ENCODE measurements at regions of chr16 and their contacts with region 1.

Region 1: DNA sequence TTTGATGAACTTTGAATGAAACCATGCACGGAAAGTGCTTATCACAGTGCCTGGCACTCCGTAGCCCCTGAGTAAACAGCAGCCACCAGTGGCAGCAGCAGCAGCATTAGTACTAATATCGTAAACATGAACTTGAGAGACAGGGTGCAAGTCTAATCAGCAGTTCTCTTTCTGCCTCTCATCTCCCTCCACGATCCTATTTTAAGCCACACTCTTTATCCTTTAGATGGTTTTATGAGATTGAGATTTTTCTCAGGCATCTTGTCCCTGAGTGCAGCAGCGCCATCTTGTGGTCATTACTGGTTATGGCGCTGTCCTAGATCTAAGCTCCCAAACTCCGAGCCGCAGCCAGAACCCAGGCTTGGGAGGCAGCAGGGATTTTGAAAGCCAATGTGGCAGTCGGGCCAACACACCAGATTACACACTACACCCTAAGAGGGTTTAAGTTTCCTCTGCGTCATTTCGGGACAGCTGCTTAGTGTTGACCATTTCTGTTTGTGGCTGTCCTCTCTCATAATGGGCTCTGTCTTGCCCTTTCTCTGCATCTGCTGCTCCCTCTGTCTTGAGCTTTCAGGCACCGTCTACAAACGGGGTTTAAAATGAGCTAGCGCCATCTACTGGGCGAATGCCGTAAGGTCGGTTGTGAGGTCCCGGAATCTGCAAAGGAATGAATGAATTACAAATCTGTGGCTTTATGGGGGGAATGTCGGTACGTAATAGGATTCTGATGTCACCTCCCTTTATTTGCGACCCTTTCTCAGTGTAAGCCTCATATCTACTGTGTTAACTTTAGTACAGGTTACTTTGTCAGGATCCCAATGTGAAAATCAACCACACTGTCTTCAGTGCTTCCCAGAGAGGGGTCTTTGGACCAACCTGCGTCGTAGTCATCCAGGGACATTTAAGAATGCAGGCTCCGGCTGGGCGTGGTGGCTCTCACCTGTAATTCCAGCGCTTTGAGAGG is 64.5 kb downstream of the CYLD start:
- DNase-seq: peak; percentile 85
- CTCF ChIP-seq: peak; percentile 96

Region 2: DNA sequence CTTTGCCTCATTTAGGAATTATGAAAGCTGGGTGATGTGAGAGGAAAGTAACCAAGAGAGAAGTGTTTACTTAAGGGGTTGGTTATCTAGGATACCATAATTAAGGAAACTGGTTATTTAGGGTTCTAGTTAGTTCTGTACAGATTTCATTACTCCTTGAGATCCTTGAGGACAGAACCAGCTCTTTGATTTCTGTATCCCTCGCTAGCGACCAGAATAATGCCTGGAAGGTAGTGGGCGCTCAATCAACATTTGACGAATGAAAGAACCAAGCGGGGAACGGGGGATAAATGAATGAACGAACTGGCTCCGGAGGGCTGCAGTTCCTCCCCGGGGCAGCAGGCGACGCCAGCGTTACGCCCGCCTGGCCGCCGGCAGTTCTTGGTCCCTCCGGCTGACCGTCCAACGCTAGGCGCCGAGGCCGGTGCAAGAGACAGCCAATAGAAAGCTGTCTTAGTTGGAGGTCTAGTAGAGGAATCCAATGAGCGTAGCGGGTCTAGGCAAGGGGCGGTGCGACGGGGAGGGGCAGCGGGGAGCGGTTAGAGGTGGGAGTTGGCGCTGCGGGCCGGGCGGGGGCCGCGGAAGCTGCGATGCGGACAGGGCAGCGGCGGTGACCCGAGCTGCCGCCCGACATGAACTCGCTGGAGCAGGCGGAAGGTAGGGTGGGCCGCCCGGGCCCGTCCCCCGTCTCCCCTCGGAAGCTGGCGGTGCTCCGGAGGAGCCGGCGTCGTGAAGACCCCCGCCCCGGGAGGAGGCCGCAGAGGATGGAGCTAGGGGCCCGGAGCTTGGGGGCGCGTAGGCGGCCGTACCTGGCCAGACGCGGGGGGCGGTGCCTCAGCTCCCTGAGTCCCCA is 781.5 kb before region 1 on chr16 and contains the start of gene CNEP1R1:
- CTCF ChIA-PET with region 1: interaction called, 28 read pairs
- POLR2A ChIA-PET with region 1: no interaction called
- DNase-seq: peak; percentile 99
- CTCF ChIP-seq: peak; percentile 100

Region 3: DNA sequence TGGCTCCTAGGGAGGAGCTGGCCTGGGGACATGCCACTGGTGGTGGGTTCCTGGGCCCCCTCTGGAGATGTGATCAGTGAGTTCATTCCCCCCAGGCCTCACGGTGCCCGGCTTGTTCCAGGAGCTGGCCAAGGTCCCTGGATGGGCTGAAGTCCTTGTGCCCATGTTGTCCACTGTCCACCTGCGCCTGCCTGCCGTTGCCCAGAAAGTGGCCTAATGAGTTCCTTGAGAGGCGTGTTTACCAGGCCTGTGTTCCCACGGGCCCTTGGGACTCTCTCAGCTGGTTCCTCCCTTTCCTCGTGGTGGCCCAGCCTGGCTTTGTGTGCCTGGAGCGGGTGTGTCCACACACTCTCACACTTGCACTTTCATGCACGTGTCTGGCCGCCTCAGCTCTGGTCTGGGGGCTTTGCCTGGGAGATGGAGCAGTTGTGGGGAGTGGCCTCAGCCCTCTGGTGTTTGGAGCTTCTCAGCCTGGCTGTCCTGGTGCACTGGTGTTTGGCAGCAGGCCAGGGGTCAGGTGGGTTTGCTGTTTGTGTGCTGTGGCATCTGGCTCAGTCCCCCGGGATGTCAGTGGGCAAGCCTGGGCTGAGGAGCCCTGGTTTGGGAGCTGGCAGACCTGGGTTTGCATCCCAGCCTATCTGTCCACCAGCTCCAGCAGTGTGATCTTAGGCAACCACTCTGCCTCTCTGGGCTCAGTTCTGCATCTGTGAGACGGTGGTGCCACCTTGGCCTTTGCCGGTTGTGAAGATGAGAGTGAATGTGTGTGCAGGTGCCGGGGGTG is 522.1 kb before region 1 on chr16:
- CTCF ChIA-PET with region 1: interaction called, 10 read pairs
- POLR2A ChIA-PET with region 1: no interaction called
- DNase-seq: no peak
- CTCF ChIP-seq: no peak

Region 4: GRCh38 chr16:50540711-50541007 is 265.7 kb before region 1 on chr16:
- CTCF ChIA-PET with region 1: interaction called, 11 read pairs
- POLR2A ChIA-PET with region 1: no interaction called
- DNase-seq: no peak
- CTCF ChIP-seq: no peak

Region 5: DNA sequence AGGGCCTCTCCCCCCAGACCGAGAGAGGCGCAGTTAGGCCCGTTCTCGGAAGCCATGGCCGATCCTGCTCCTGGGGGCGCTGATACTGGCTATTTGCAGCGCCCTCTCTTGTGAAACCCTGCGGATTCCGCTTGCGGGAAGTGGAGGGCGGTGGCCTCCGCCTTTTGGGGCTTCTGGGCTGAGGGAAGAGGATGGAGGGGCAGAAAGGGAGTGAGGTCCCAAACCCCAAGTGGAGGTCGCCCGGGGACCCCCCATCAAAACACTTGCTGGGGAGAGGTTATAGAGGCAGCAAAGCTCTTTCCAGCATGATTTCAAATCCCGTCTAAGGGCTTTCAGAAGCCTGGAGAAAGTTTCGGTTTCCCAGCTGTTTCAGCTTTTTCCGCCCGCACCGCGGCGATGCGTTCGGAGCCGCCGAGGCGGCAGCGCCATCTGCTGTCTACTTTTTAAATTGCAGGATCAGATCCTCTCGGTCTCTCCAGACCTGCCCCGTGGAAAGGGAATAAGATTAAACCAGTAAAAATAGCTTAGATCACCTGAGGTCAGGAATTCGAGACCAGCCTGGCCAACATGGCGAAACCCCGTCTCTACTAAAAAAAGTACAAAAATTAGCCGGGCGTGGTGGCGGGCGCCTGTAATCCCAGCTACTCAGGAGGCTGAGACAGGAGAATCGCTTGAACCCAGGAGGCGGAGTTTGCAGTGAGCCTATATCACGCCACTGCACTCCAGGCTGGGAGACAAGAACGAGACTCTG is 141.1 kb before region 1 on chr16:
- CTCF ChIA-PET with region 1: interaction called, 232 read pairs
- POLR2A ChIA-PET with region 1: interaction called, 3 read pairs
- DNase-seq: peak; percentile 78
- CTCF ChIP-seq: peak; percentile 75

Region 6: GRCh38 chr16:50747207-50747956 is 59.0 kb before region 1 on chr16:
- CTCF ChIA-PET with region 1: interaction called, 30 read pairs
- POLR2A ChIA-PET with region 1: no interaction called
- DNase-seq: peak; percentile 40
- CTCF ChIP-seq: peak; percentile 29

Region 7: GRCh38 chr16:50879873-50880695 is 73.7 kb after region 1 on chr16:
- CTCF ChIA-PET with region 1: no interaction called
- POLR2A ChIA-PET with region 1: no interaction called
- DNase-seq: no peak
- CTCF ChIP-seq: no peak

Region 8: DNA sequence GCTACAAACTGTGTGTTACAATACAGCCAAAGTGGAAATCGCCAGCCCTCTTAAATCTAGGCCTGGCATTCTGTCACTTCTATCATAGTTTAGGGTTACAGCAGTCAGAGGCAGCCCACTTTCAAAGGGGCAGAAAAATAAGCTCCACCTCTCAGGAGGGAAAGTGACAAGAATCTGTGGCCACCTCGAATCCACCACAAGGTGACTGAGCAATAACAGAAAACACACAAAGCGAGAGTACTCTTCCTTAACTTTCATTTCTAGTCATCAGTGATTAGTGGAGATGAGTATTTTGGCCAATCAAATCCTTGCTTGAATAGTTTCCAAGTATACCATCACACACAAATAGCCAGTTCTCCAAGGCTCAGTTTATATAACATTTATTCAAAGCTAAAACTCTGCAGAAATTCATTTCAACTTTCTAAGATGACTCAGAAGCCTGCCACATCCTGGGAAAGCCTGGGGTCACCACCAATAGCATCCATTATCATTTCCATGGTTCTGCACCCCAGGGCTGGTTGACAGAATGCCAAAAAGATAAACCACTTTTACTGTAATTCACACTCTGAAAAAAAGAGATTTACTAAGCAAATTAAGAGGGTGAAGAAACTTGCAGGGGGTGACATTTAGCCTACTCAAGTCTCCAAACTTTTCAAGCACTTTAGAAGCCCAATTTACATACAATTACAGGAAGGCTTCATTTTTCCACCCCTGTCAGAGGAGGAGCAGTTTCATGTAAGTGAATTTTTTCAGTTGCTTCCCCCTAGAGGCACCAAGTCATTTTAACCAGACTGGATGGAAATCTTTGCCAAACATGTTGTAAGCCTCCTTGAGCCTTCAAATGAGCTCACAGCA is 277.9 kb after region 1 on chr16:
- CTCF ChIA-PET with region 1: no interaction called
- POLR2A ChIA-PET with region 1: no interaction called
- DNase-seq: no peak
- CTCF ChIP-seq: no peak

Measured in GM10248 (cell line).